Heart left ventricle (tissue), 16 donors: ENCODE measurements at regions of chr17 and their contacts with region 1.

Region 1: GRCh38 chr17:28416703-28417311 is 10.8 kb upstream of the SLC46A1 start:
- DNase-seq: peak in 4 of 5 donors; percentile 37 to 50 (median 44)
- ATAC-seq: peak; percentile 74 to 78 (median 77)
- H3K4me3 ChIP-seq: no peak overlapping the region
- H3K27ac ChIP-seq: no peak overlapping the region
- H3K4me1 ChIP-seq: peaks cover 0 to 6% (median 0%) of the 10 kb centered on the region in 12 donors
- H3K27me3 ChIP-seq: peaks cover 0 to 8% (median 0%) of the 10 kb centered on the region in 9 donors
- CTCF ChIP-seq: peak; percentile 37 to 87 (median 54)
- POLR2A ChIP-seq: no peak

Region 2: DNA sequence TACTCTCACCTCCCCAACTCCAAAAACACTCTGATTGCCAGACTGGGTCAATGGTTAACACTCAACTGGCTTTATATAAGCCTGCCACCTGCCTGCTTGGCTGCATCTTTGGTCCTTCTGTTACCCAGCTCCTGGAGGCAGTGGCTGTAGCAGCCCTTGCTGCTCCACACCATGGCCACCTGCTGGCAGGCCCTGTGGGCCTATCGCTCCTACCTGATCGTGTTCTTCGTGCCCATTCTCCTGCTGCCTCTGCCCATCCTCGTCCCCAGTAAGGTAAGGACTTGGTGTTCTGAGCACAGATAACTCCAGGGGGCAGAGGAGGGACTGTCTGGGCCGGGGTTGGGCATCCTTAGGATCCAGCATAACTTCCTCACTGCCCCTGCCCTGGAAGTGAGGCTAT is 56.7 kb after region 1 on chr17 and contains the start of gene SLC13A2:
- intact Hi-C with region 1: loop called in 1 of 10 experiments (anchors 10 kb)
- DNase-seq: no peak
- ATAC-seq: no peak
- H3K4me3 ChIP-seq: no peak within 1 kb of the TSS
- H3K27ac ChIP-seq: no peak within 1 kb of the TSS
- H3K4me1 ChIP-seq: no peaks in the 10 kb centered on the region
- H3K27me3 ChIP-seq: no peaks in the 10 kb centered on the region
- CTCF ChIP-seq: no peak
- POLR2A ChIP-seq: no peak
- total RNA-seq, gene SLC13A2: not detected

Region 3: GRCh38 chr17:28500712-28501379 is 84.0 kb after region 1 on chr17:
- intact Hi-C with region 1: no loop called
- DNase-seq: peak in 1 of 5 donors; percentile 27
- ATAC-seq: peak in 1 of 4 donors; percentile 12
- H3K4me3 ChIP-seq: no peak overlapping the region
- H3K27ac ChIP-seq: no peak overlapping the region
- H3K4me1 ChIP-seq: peaks cover 0 to 13% (median 0%) of the 10 kb centered on the region in 12 donors
- H3K27me3 ChIP-seq: peaks cover 0 to 7% (median 0%) of the 10 kb centered on the region in 9 donors
- CTCF ChIP-seq: no peak
- POLR2A ChIP-seq: no peak